ENCODE measurements at regions of chr18 and their contacts with region 1.

Region 1: GRCh38 chr18:37335409-37335736 is 230.2 kb downstream of the CELF4 start:
- DNase-seq: no peak
- H3K4me3 ChIP-seq: no peak overlapping the region
- H3K27ac ChIP-seq: no peak overlapping the region
- H3K4me1 ChIP-seq: peaks cover 0 to 4% (median 1%) of the 10 kb centered on the region in 4 experiments; a peak in 4 of 7 replicates
- H3K27me3 ChIP-seq: 0 out of 7 replicates have a peak, but pooled peaks cover 0 to 5% (median 0%) of the 10 kb centered on the region in 4 experiments
- CTCF ChIP-seq: peak; percentile 25 to 59 (median 44); a peak in 3 of 4 replicates
- EP300 ChIP-seq: no peak
- POLR2A ChIP-seq: no peak
- RAD21 ChIP-seq: peak; percentile 42 to 49

Region 2: GRCh38 chr18:37299471-37300304 is 35.7 kb before region 1 on chr18:
- CTCF ChIA-PET with region 1: interaction called, 10 read pairs
- POLR2A ChIA-PET with region 1: no interaction called
- DNase-seq: no peak
- H3K4me3 ChIP-seq: no peak overlapping the region
- H3K27ac ChIP-seq: no peak overlapping the region
- H3K4me1 ChIP-seq: no peaks in the 10 kb centered on the region; a peak in 1 of 7 replicates
- H3K27me3 ChIP-seq: no peaks in the 10 kb centered on the region
- CTCF ChIP-seq: no peak
- EP300 ChIP-seq: no peak
- POLR2A ChIP-seq: no peak
- RAD21 ChIP-seq: no peak

Region 3: GRCh38 chr18:37314534-37314933 is 20.8 kb before region 1 on chr18:
- CTCF ChIA-PET with region 1: interaction called, 10 read pairs
- POLR2A ChIA-PET with region 1: no interaction called
- DNase-seq: no peak
- H3K4me3 ChIP-seq: no peak overlapping the region
- H3K27ac ChIP-seq: no peak overlapping the region
- H3K4me1 ChIP-seq: peaks cover 0 to 3% (median 0%) of the 10 kb centered on the region in 4 experiments; a peak in 3 of 7 replicates
- H3K27me3 ChIP-seq: no peaks in the 10 kb centered on the region
- CTCF ChIP-seq: peak in 2 of 3 experiments; percentile 30 to 36; a peak in 3 of 4 replicates
- EP300 ChIP-seq: no peak
- POLR2A ChIP-seq: no peak
- RAD21 ChIP-seq: peak; percentile 43 to 53

Region 4: GRCh38 chr18:37346048-37346447 is 10.7 kb after region 1 on chr18:
- CTCF ChIA-PET with region 1: interaction called, 24 read pairs
- POLR2A ChIA-PET with region 1: no interaction called
- DNase-seq: no peak
- H3K4me3 ChIP-seq: no peak overlapping the region
- H3K27ac ChIP-seq: no peak overlapping the region
- H3K4me1 ChIP-seq: peaks cover 0 to 5% (median 2%) of the 10 kb centered on the region in 4 experiments; a peak in 6 of 7 replicates
- H3K27me3 ChIP-seq: peaks cover 0 to 3% (median 0%) of the 10 kb centered on the region in 4 experiments; a peak in 1 of 7 replicates
- CTCF ChIP-seq: no peak
- EP300 ChIP-seq: no peak
- POLR2A ChIP-seq: no peak
- RAD21 ChIP-seq: no peak

Region 5: DNA sequence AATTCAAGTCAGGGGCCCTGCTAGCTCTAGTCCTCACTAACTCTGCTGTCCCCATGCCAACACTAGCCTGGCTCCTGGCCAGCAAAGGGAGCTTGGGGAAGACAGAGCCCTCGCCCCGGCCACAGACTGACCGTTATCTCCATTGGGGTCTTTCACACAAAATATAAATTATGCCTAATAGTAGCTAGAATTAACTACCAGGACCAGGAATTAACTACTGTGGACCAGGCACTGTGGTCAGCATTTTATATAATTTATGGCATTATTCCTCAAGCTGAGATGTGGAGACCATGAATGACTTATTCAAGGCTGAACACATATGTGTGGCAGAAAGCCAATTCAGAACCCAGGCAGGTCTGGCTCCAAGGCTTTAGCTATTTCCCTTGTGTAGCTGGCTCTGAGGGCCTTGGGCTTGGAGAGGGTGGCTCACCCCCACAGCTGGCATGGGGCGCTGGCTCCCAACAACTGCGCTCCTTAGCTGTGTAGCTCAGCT is 181.0 kb after region 1 on chr18:
- CTCF ChIA-PET with region 1: no interaction called
- POLR2A ChIA-PET with region 1: no interaction called
- DNase-seq: no peak
- H3K4me3 ChIP-seq: no peak overlapping the region
- H3K27ac ChIP-seq: no peak overlapping the region
- H3K4me1 ChIP-seq: no peaks in the 10 kb centered on the region
- H3K27me3 ChIP-seq: peaks cover 0 to 6% (median 0%) of the 10 kb centered on the region in 4 experiments; a peak in 1 of 7 replicates
- CTCF ChIP-seq: no peak
- EP300 ChIP-seq: no peak
- POLR2A ChIP-seq: no peak
- RAD21 ChIP-seq: no peak

Region 6: DNA sequence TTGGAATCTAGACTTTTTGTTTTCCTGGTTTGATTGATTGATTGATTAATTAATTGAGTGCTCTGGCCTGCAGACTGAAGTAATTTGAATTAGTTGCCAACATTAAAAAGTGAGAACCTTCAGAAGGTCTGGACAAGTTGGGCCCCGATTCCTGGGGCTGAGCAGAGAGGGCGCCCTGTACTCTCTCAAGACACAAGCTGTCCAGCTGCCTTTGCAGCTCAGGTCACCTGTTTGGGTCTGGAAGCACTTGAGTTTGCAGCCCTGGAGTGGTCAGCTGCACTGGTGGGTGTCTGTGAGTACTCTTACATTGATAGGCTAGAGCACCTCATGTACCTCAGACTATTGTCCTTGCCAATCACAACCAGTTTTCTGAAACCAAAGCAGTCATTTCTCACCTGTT is 252.9 kb after region 1 on chr18:
- CTCF ChIA-PET with region 1: no interaction called
- POLR2A ChIA-PET with region 1: no interaction called
- DNase-seq: peak in 1 of 2 experiments; percentile 41
- H3K4me3 ChIP-seq: no peak overlapping the region
- H3K27ac ChIP-seq: no peak overlapping the region
- H3K4me1 ChIP-seq: peaks cover 0 to 10% (median 7%) of the 10 kb centered on the region in 4 experiments; a peak in 3 of 7 replicates
- H3K27me3 ChIP-seq: peaks cover 0 to 2% (median under 1%) of the 10 kb centered on the region in 4 experiments; a peak in 3 of 7 replicates
- CTCF ChIP-seq: peak; percentile 19 to 34 (median 26); a peak in 3 of 4 replicates
- EP300 ChIP-seq: no peak
- POLR2A ChIP-seq: no peak
- RAD21 ChIP-seq: peak; percentile 41 to 53